ENCODE measurements at regions of chr1 and their contacts with region 1.

Region 1: DNA sequence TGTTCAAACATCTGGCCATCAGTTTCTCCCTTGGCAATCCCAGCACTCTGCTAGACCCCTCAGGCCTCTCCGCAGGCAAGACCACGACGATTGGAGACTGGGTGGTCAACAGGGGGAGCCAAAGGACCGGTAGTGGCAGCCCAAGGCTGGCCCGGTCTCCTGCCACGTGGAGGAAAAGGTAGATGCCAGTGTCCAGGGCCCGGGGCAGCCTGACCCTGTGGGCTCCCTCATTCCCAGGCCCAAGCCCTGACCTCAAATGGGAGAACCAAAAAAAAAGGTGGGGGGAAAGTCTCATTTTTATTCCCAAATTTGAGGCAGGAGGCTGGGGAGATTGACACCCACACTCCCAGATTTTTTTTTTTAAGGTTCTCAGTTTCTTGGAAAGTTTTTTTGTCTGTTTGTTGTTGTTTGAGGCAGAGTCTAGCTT is 24.8 kb downstream of the S100A6 start:
- DNase-seq: peak; percentile 84 to 90 (median 86)
- H3K4me3 ChIP-seq: no peak overlapping the region
- H3K27ac ChIP-seq: no peak overlapping the region
- H3K4me1 ChIP-seq: peaks cover 19% of the 10 kb centered on the region
- H3K27me3 ChIP-seq: no peaks in the 10 kb centered on the region
- CTCF ChIP-seq: peak; percentile 84 to 91 (median 86)
- EP300 ChIP-seq: no peak
- POLR2A ChIP-seq: peak; percentile 3

Region 2: DNA sequence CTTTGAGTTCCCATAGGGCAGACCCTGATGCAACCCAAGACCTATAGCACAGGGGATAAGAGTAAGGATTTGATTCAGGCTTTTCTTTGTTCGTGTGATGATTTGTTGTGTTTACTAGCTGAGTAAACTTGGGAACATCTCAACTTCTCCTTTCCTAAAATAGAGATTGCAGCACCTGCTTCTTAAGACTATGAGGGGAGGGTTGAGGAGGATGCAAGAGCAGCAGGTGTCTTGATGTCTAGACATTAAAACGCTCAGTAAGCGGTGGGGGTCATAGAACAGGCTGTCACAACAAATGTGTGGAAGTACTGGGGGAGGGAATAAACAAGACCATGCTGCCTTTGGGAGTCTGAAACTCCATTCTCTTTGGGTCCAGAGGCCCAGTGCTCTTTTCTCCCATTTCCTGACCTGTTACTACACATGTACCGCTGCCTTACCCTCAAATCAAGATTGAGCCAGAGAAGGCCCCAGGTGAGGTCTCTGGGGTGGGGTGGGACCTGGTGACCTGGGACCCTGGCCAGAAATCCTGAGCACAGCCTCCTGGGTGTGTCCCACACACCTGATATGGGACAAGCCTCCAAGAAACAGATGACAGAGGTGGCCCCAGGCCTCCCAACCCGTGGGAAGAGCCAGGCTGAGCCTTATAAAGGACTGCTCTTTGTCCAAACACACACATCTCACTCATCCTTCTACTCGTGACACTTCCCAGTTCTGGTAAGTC is 95.0 kb before region 1 on chr1 and contains the start of gene S100A7A:
- intact Hi-C with region 1: no loop called
- DNase-seq: peak in 1 of 5 donors; percentile 0
- H3K4me3 ChIP-seq: no peak within 1 kb of the TSS
- H3K27ac ChIP-seq: no peak within 1 kb of the TSS
- H3K4me1 ChIP-seq: no peaks in the 10 kb centered on the region
- H3K27me3 ChIP-seq: no peaks in the 10 kb centered on the region
- CTCF ChIP-seq: no peak
- EP300 ChIP-seq: no peak
- POLR2A ChIP-seq: no peak
- total RNA-seq, gene S100A7A: not detected

Region 3: GRCh38 chr1:153572569-153573015 is 61.6 kb after region 1 on chr1:
- intact Hi-C with region 1: loop called in 3 of 4 experiments (anchors 1 to 2 kb)
- DNase-seq: peak; percentile 79 to 87 (median 84)
- H3K4me3 ChIP-seq: no peak overlapping the region
- H3K27ac ChIP-seq: no peak overlapping the region
- H3K4me1 ChIP-seq: peaks cover 1% of the 10 kb centered on the region
- H3K27me3 ChIP-seq: no peaks in the 10 kb centered on the region
- CTCF ChIP-seq: peak; percentile 74 to 80 (median 76)
- EP300 ChIP-seq: no peak
- POLR2A ChIP-seq: no peak

Region 4: DNA sequence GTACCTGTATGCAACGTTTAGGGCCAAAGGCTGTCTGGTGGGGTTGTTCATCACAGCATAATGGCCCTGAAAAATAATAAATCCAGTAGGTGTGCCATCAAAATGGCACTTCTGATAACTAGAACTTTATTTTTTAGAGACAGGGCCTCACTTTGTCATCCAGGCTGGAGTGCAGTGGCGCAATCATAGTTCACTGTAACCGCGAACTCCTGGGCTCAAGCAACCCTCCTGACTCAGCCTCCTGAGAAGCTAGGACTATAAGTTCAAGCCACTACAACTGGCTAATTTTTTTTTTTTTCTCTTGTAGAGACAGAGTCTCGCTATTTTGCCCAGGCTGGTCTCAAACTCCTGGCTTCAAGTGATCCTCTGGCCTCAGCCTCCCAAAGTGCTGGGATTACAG is 152.2 kb after region 1 on chr1:
- intact Hi-C with region 1: loop called in 1 of 4 experiments (anchors 10 kb)
- DNase-seq: peak in 3 of 5 donors; percentile 2 to 7 (median 6)
- H3K4me3 ChIP-seq: no peak overlapping the region
- H3K27ac ChIP-seq: no peak overlapping the region
- H3K4me1 ChIP-seq: peaks cover 2% of the 10 kb centered on the region
- H3K27me3 ChIP-seq: no peaks in the 10 kb centered on the region
- CTCF ChIP-seq: no peak
- EP300 ChIP-seq: no peak
- POLR2A ChIP-seq: no peak

Region 5: GRCh38 chr1:153775458-153776327 is 264.7 kb after region 1 on chr1:
- intact Hi-C with region 1: loop called in 2 of 4 experiments (anchors 10 kb)
- DNase-seq: peak; percentile 82 to 85 (median 83)
- H3K4me3 ChIP-seq: peak overlapping the region; percentile 73
- H3K27ac ChIP-seq: peak overlapping the region; percentile 69 to 84
- H3K4me1 ChIP-seq: peaks cover 9% of the 10 kb centered on the region
- H3K27me3 ChIP-seq: no peaks in the 10 kb centered on the region
- CTCF ChIP-seq: no peak
- EP300 ChIP-seq: no peak
- POLR2A ChIP-seq: peak; percentile 31